ENCODE measurements at regions of chr3 and their contacts with region 1.

Region 1: GRCh38 chr3:57007513-57008460 is 52.7 kb upstream of the SPATA12 start:
- DNase-seq: peak; percentile 82 to 87 (median 83)
- ATAC-seq: peak; percentile 91
- H3K4me3 ChIP-seq: no peak overlapping the region
- H3K27ac ChIP-seq: peak overlapping the region; percentile 73
- H3K4me1 ChIP-seq: peaks cover 5% of the 10 kb centered on the region
- H3K27me3 ChIP-seq: no peaks in the 10 kb centered on the region

Region 2: DNA sequence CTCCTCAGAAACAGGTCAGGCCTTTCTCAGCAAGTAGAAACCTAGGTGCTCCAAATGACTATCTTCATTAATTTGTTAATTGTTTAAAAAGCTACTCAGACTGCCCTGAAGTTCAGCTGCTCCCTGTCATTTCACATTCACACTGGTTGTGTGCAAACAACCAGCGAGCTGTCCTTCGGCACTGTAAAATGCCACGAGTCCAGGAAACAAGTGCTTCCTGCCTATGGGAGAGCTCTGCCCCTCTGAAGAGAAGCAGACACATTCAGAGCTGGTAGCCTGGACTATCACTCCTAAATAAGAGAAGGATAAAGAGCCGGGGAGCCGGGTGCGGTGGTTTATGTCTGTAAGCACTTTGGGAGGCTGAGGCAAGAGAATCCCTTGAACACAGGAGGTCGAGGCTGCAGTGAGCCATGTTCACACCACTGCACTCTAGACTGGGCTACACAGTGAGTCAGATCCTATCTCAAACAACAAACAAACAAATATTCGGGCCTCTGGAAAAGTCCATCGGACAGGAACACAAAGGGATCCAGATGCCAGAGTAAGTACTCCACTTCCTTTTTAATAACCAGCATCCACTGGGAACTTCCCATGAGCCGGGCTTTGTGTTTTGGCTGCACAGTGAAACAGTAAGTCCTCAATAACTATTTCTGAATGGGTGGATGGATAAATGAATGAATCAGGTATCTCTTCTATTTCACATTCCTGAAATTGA is 1406.3 kb before region 1 on chr3:
- intact Hi-C with region 1: no loop called
- DNase-seq: no peak
- ATAC-seq: no peak
- H3K4me3 ChIP-seq: no peak overlapping the region
- H3K27ac ChIP-seq: no peak overlapping the region
- H3K4me1 ChIP-seq: no peaks in the 10 kb centered on the region
- H3K27me3 ChIP-seq: no peaks in the 10 kb centered on the region

Region 3: GRCh38 chr3:57068437-57069089 is 60.8 kb after region 1 on chr3:
- intact Hi-C with region 1: loop called in 1 of 4 experiments (anchors 5 kb)
- DNase-seq: peak; percentile 56 to 83 (median 60)
- ATAC-seq: peak; percentile 89 to 92
- H3K4me3 ChIP-seq: no peak overlapping the region
- H3K27ac ChIP-seq: peak overlapping the region; percentile 63
- H3K4me1 ChIP-seq: no peaks in the 10 kb centered on the region
- H3K27me3 ChIP-seq: no peaks in the 10 kb centered on the region

Region 4: GRCh38 chr3:57078344-57078634 is 70.5 kb after region 1 on chr3:
- intact Hi-C with region 1: loop called in 1 of 4 experiments (anchors 5 kb)
- DNase-seq: peak in 2 of 3 donors; percentile 61 to 77
- ATAC-seq: peak in 1 of 2 donors; percentile 64
- H3K4me3 ChIP-seq: peak overlapping the region; percentile 61
- H3K27ac ChIP-seq: no peak overlapping the region
- H3K4me1 ChIP-seq: no peaks in the 10 kb centered on the region
- H3K27me3 ChIP-seq: no peaks in the 10 kb centered on the region

Measured in right cardiac atrium (tissue), 5 donors.